MCF 10A (cell line): ENCODE measurements at regions of chr16 and their contacts with region 1.

Region 1: DNA sequence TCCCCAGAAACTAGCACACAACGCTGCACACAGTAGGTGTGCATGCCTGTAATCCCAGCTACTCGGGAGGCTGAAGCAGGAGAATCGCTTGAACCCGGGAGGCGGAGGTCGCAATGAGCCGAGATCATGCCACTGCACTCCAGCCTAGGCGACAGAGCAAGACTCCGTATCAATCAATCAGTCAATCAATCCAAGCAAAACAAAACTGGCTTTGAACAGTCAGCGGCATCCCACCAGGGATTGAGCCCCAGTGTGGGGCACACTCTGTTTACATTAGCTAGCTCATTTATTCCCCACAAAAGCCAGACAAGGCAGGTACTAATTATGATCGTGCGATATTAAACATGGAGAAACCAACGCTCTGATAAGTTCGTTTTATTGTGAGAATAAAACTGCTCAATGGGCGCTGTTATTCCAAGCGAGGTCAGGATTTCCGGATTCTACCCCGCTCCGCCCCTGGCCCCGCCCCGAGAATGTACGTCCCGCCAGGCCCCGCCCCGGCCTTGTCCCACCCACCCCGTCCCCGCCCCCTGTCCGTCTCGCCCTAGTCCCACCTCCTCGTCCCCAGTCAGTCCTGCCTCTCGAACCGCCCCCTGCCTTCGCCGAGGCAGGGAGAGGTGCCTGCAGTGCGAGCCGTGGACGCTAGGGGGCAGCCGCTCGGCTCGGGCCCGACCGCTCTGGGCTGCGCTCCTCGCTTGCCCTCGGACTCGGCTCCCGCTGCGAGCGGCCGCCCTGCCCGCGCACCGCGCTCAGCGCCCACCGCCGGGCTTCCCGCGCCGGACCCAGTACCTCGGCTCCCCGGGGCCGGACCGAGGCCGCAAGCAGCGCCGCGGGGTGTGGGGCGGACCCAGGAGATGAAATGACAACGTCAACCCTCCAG is at the start of gene VPS4A:
- DNase-seq: peak; percentile 95
- H3K4me3 Mint-ChIP-seq: peak within 1 kb of the TSS; percentile 91
- H3K27ac Mint-ChIP-seq: peak within 1 kb of the TSS; percentile 89
- H3K4me1 Mint-ChIP-seq: peaks cover 16% of the 10 kb centered on the region
- H3K27me3 Mint-ChIP-seq: no peaks in the 10 kb centered on the region
- CTCF ChIP-seq: peak; percentile 81
- total RNA-seq, gene VPS4A: 34.4 and 38.6 TPM in 2 replicates

Region 2: GRCh38 chr16:69132424-69133252 is 178.3 kb before region 1 on chr16 and contains the starts of genes CHTF8 and UTP4:
- CTCF ChIA-PET with region 1: no interaction called
- POLR2A ChIA-PET with region 1: interaction called, 13 read pairs
- intact Hi-C with region 1: no loop called
- DNase-seq: peak; percentile 76
- H3K4me3 Mint-ChIP-seq: peak within 1 kb of the TSS; percentile 87
- H3K27ac Mint-ChIP-seq: peak within 1 kb of the TSS; percentile 87
- H3K4me1 Mint-ChIP-seq: peaks cover 20% of the 10 kb centered on the region
- H3K27me3 Mint-ChIP-seq: no peaks in the 10 kb centered on the region
- CTCF ChIP-seq: no peak
- total RNA-seq, gene CHTF8: 107 and 113 TPM in 2 replicates
- total RNA-seq, gene UTP4: 77.1 and 97.1 TPM in 2 replicates

Region 3: DNA sequence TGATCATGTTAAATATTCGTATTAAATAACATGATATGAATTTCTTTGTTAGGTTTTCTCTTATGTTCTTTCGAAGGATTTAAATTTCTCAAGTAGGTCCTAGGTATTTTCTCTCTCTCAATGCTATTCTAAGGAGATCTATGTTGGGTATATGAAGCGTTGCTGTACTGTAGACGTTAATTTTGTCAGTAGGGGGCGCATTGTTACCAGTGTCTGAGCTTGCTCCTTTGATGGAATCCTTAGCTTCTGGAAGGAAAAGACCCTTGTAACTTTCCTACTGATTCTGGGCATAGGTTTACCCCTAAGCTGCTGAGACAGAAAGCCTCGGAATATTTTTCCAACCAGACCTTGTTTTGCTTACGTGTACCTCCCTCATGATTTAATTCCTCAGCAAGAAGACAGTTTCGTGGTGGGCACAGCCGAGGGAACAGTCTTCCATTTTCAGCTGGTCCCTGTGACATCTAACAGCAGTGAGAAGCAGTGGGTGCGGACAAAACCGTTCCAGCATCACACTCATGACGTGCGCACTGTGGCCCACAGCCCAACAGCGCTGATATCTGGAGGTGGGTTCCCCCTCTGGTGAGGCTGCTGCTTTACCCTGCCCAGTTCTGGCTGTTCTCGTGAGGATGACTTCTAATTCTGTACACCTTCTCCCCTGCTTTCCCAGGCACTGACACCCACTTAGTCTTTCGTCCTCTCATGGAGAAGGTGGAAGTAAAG is 160.6 kb before region 1 on chr16:
- CTCF ChIA-PET with region 1: interaction called, 4 read pairs
- POLR2A ChIA-PET with region 1: interaction called, 4 read pairs
- intact Hi-C with region 1: loop called (anchors 1 kb)
- DNase-seq: peak; percentile 82
- H3K4me3 Mint-ChIP-seq: no peak overlapping the region
- H3K27ac Mint-ChIP-seq: no peak overlapping the region
- H3K4me1 Mint-ChIP-seq: no peaks in the 10 kb centered on the region
- H3K27me3 Mint-ChIP-seq: no peaks in the 10 kb centered on the region
- CTCF ChIP-seq: peak; percentile 77

Region 4: DNA sequence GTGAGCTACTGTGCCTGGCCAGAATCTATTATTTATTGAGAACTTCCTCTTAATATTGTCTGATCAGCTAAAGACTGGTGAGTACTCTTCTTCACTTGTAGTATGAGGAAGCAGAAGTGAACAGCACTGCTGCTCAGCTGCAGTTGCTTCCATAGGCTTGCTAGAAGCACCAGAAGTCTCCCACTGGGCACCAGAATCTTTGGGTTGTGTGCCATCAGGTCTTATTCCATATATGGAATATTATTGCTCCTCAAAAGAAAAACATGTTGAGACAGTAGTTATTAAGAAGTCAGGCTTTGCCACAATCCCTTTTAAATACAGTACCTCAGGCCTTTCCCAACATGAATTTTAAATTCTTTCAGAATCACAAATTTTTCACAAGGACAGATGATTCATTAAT is 106.7 kb before region 1 on chr16:
- CTCF ChIA-PET with region 1: no interaction called
- POLR2A ChIA-PET with region 1: no interaction called
- intact Hi-C with region 1: no loop called
- DNase-seq: no peak
- H3K4me3 Mint-ChIP-seq: no peak overlapping the region
- H3K27ac Mint-ChIP-seq: peak overlapping the region; percentile 89
- H3K4me1 Mint-ChIP-seq: peaks cover 35% of the 10 kb centered on the region
- H3K27me3 Mint-ChIP-seq: no peaks in the 10 kb centered on the region
- CTCF ChIP-seq: no peak

Region 5: DNA sequence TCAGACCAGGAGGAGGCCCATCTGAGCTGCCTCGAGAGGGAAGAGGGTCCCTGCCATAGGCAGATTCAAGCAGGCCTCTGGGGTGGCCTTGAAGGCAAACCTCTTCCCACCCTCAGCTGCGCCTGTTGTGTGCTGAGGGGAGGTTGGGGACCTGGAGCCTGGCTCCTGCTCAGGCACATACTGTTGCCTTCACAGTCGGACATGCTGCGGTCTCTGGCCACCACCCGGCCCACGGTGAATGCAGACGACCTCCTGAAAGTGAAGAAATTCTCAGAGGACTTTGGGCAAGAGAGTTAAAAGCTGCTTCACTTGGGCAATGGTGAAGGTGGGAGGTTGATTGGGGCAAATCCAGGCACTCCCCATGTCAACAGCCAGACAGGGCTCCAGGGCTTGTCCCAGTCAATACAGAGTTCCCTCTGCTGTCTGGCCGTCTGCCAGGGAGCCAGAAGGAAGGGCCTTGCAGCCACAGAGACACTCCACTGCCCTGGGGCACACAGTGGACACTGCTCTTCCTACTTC is 13.2 kb after region 1 on chr16:
- CTCF ChIA-PET with region 1: interaction called, 15 read pairs
- POLR2A ChIA-PET with region 1: interaction called, 75 read pairs
- intact Hi-C with region 1: no loop called
- DNase-seq: no peak
- H3K4me3 Mint-ChIP-seq: no peak overlapping the region
- H3K27ac Mint-ChIP-seq: peak overlapping the region; percentile 23
- H3K4me1 Mint-ChIP-seq: peaks cover 20% of the 10 kb centered on the region
- H3K27me3 Mint-ChIP-seq: no peaks in the 10 kb centered on the region
- CTCF ChIP-seq: no peak

Region 6: DNA sequence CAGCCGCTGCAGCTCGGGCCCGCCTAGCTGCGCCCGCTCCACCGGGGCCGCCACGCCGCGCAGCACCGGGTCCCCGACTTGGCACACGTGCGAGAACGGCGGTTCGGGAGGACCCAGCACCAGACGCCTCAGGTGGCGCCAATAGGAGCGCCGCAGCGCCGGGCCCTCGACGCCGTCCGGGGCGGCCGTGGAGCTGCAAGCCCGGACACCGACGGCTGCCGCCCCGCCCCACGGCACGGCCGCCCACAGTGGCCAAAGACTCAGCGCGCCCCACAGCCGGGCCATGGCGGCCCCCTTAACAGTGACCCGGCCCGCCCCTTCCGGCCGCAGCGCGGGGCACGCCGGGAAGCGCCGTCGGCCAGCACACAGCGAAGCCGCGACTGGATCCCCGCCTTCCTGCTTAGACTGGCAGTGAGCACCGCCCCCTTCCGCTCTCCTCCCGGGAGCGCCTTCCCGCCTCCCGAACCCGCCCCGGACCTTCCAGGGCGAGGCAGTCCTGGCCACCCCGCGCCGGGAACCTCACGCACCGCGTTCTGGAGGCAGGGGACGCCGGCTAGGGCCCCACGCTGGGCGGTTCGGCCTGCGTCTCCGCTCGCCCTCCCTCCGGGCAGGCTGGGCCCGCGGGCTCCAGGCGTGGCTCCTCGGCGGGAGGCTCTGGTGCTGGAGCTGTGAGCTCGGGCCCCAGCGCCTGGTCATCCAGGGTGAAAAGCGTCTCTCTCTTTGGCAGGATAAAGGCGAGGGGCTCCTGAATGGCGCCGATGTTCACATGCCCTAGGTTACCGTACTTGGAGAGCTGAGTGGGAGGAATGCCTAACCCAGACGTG is 19.6 kb after region 1 on chr16 and contains the start of gene PDF:
- CTCF ChIA-PET with region 1: interaction called, 5 read pairs
- POLR2A ChIA-PET with region 1: interaction called, 75 read pairs
- intact Hi-C with region 1: no loop called
- DNase-seq: peak; percentile 93
- H3K4me3 Mint-ChIP-seq: peak within 1 kb of the TSS; percentile 81
- H3K27ac Mint-ChIP-seq: peak within 1 kb of the TSS; percentile 66
- H3K4me1 Mint-ChIP-seq: peaks cover 24% of the 10 kb centered on the region
- H3K27me3 Mint-ChIP-seq: no peaks in the 10 kb centered on the region
- CTCF ChIP-seq: no peak
- total RNA-seq, gene PDF: 19.4 and 24.8 TPM in 2 replicates